Body of pancreas (tissue), 4 donors: ENCODE measurements at regions of chr6 and their contacts with region 1.

Region 1: GRCh38 chr6:135451693-135452092 is 45.8 kb downstream of the AHI1 start:
- DNase-seq: no peak
- ATAC-seq: peak; percentile 59
- H3K4me3 ChIP-seq: no peak overlapping the region
- H3K27ac ChIP-seq: no peak overlapping the region
- H3K4me1 ChIP-seq: no peaks in the 10 kb centered on the region
- H3K27me3 ChIP-seq: no peaks in the 10 kb centered on the region
- CTCF ChIP-seq: peak; percentile 54 to 67 (median 59)
- POLR2A ChIP-seq: no peak

Region 2: DNA sequence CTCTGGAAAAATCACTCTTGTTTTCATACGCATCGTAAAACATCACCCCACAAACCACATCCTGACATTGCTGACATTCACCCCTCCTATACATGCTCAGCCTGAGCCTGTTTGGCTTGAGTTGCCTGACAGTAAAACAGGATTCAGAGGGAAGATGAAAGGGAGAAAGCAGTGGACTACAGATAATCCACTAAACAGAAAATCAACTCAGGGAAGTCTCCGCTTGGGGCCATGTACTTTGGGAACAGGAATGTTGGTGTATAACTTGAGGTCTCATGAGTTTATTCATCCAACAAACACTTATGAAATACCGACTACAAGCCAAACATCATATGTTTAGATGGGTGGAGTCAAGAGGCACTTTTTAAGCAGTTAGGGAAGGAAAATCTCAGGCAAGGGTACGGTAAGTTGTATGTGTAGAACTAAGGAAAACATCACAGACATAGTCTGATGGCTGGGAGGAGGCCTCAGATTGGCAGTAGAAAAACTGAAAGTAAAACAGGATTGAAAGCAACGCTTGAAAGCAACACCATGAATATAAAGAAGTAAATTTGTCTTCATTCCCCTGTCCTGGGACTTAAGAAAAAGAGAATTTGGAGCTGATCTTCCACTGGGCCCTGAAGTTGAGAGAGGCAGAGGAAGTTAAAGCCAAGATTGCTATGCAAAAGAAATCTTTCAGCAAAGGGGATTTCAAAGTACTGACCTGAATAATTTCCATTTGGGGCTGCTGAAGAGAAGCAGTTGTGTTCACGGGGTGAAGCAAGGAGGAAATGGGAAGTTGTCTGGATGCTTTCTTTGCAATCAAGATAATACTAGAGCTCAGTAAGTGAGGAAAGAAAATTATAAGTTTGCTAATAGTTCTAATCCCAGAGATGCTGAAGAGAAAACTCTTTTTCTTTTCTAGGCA is 428.6 kb after region 1 on chr6:
- intact Hi-C with region 1: no loop called
- DNase-seq: no peak
- ATAC-seq: no peak
- H3K4me3 ChIP-seq: no peak overlapping the region
- H3K27ac ChIP-seq: no peak overlapping the region
- H3K4me1 ChIP-seq: no peaks in the 10 kb centered on the region
- H3K27me3 ChIP-seq: no peaks in the 10 kb centered on the region
- CTCF ChIP-seq: no peak
- POLR2A ChIP-seq: no peak

Region 3: DNA sequence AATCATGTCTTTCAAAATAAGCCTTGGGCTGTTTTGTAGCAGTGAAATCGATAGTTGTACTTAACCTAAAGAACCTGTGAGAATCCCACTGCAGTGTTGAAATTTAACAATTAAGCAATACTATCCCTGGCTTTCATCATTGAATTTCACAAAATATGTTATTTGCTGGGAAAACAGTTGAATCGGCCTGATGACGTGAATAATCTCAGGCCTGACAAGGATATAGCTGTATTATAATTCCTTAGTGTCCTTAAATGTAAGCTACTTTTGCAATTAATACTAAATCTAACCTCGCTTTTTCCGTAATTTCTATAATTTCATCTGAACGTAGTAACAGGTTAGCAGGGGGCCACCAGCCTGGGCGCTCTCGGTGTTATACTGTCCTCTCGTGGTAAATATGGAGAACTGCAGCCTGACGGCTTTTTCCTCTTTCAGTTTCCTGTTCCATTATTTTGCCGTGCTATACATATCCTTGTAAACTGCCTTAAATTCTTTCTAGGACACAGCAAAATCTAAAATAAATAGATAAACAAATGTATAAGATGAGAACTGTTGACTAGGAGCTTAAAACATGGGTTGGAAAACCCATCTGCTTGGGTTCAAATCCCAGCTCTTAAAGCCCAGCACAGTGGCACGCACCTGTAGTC is 774.5 kb after region 1 on chr6:
- intact Hi-C with region 1: loop called (anchors 10 kb)
- DNase-seq: peak; percentile 51 to 65 (median 58)
- ATAC-seq: peak; percentile 87
- H3K4me3 ChIP-seq: no peak overlapping the region
- H3K27ac ChIP-seq: no peak overlapping the region
- H3K4me1 ChIP-seq: peaks cover 7% of the 10 kb centered on the region
- H3K27me3 ChIP-seq: no peaks in the 10 kb centered on the region
- CTCF ChIP-seq: peak; percentile 99 to 100 (median 99)
- POLR2A ChIP-seq: no peak